ENCODE measurements at regions of chr7 and their contacts with region 1.

Region 1: GRCh38 chr7:130277763-130278643 is 11.3 kb downstream of the CPA2 start:
- DNase-seq: peak; percentile 29 to 87 (median 67)

Region 2: GRCh38 chr7:130322587-130322986 is 44.6 kb after region 1 on chr7:
- intact Hi-C with region 1: no loop called
- DNase-seq: no peak

Region 3: DNA sequence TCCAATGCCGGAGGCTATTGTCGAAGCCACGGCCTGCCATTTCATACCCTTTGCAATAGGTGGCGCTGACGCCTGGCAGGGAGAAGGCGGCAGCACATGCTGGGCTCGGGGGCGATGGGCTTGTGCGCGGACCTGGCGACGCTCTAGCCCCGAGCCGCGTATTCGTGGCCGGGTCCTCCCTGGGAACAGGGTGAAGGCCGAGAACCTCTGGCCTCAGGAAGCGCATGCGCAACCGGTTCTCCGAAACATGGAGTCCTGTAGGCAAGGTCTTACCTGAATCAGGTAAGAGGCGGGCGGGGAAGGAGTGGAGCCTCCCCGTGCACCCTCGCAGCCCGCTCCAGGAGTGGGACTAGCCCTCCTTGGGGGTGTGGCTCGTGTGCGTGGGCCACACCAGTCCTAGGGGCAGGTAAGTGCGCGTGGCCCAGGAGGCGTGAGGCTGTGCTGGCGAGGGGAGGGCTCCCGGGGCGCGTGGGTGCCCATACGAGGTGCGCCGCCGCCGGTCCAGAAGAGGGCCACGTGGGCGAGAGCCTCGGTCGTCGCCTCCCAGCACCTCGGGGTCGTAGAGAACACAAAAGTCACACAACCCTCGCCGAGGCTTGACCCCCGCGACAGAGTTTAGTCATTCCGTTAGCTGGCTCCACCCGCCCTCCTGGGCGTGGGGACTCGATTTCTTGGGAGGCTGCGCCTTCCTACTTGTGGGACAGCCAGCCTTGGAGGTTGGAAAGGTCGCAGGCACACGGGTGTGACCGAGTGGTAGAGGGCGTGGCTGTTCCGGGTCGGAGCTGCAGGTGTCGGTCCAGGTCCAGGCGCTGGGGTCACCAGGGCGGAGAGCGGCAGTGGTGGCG is 208.3 kb after region 1 on chr7:
- intact Hi-C with region 1: loop called (anchors 10 kb)
- DNase-seq: peak; percentile 23 to 80 (median 57)

Measured in head of caudate nucleus (tissue), 42 donors.